Calu3 (cell line): ENCODE measurements at regions of chr14 and their contacts with region 1.

Region 1: GRCh38 chr14:36553656-36554260 is 28.7 kb downstream of the NKX2-8 start:
- DNase-seq: peak; percentile 32
- H3K4me3 Mint-ChIP-seq: no peak overlapping the region
- H3K27ac Mint-ChIP-seq: no peak overlapping the region
- H3K4me1 Mint-ChIP-seq: no peaks in the 10 kb centered on the region
- H3K27me3 Mint-ChIP-seq: no peaks in the 10 kb centered on the region
- CTCF ChIP-seq: peak; percentile 51

Region 2: GRCh38 chr14:35883677-35884293 is 670.0 kb before region 1 on chr14:
- CTCF ChIA-PET with region 1: interaction called, 3 read pairs
- intact Hi-C with region 1: loop called (anchors 5 kb)
- DNase-seq: peak; percentile 37
- H3K4me3 Mint-ChIP-seq: no peak overlapping the region
- H3K27ac Mint-ChIP-seq: no peak overlapping the region
- H3K4me1 Mint-ChIP-seq: peaks cover 8% of the 10 kb centered on the region
- H3K27me3 Mint-ChIP-seq: no peaks in the 10 kb centered on the region
- CTCF ChIP-seq: peak; percentile 58

Region 3: GRCh38 chr14:36105401-36105800 is 448.4 kb before region 1 on chr14:
- CTCF ChIA-PET with region 1: interaction called, 5 read pairs
- intact Hi-C with region 1: loop called (anchors 10 kb)
- DNase-seq: peak; percentile 23
- H3K4me3 Mint-ChIP-seq: no peak overlapping the region
- H3K27ac Mint-ChIP-seq: no peak overlapping the region
- H3K4me1 Mint-ChIP-seq: peaks cover 9% of the 10 kb centered on the region
- H3K27me3 Mint-ChIP-seq: no peaks in the 10 kb centered on the region
- CTCF ChIP-seq: no peak

Region 4: GRCh38 chr14:36361210-36361853 is 192.4 kb before region 1 on chr14:
- CTCF ChIA-PET with region 1: no interaction called
- intact Hi-C with region 1: no loop called
- DNase-seq: no peak
- H3K4me3 Mint-ChIP-seq: no peak overlapping the region
- H3K27ac Mint-ChIP-seq: no peak overlapping the region
- H3K4me1 Mint-ChIP-seq: no peaks in the 10 kb centered on the region
- H3K27me3 Mint-ChIP-seq: no peaks in the 10 kb centered on the region
- CTCF ChIP-seq: no peak

Region 5: GRCh38 chr14:36451301-36452065 is 102.3 kb before region 1 on chr14:
- CTCF ChIA-PET with region 1: no interaction called
- intact Hi-C with region 1: no loop called
- DNase-seq: no peak
- H3K4me3 Mint-ChIP-seq: no peak overlapping the region
- H3K27ac Mint-ChIP-seq: no peak overlapping the region
- H3K4me1 Mint-ChIP-seq: no peaks in the 10 kb centered on the region
- H3K27me3 Mint-ChIP-seq: no peaks in the 10 kb centered on the region
- CTCF ChIP-seq: no peak

Region 6: DNA sequence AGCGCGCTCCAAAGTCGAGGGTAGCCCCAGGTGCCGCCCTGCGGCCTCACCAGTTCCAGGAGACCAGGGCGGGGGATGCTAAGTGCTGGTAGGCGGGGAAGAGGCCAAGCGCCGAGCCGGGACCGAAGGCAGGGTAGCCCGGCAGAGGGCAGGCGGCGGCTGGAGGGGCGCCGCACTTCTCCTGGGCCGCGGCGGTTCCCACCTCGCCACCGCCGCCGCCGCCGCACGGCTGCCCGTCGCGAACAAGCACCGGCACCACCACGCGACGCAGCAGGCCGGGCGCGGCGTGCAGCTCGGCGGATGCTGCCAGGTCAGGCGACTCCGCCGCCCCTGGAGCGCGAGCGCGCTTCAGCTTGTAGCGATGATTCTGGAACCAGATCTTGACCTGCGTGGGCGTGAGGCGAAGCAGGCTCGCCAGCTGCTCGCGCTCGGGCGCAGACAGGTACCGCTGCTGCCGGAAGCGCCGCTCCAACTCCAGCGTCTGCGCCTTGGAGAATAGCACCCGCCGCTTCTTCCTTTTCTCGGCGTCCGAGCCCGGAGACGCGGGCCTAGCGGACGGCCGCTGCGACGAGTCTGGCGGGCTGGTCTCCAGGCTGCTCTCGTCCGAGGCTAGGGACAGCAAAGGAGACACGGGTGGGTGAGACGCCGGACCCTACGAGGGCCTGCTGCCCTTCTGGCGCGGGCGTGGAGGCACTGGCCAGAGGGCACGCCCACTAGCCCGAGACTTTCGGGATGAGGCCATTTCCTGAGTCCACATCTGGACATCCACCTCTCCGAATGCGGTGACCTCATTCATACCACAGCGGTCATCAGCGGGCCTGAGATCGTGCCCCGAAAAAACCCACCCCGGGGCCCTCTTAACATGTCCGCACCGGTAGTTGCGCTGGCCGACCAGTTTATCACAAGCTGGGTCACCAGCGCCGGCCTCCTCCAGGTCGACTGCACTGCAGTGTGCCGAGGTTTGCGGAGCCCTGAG is 27.4 kb after region 1 on chr14:
- CTCF ChIA-PET with region 1: no interaction called
- intact Hi-C with region 1: no loop called
- DNase-seq: peak; percentile 49
- H3K4me3 Mint-ChIP-seq: peak overlapping the region; percentile 80
- H3K27ac Mint-ChIP-seq: no peak overlapping the region
- H3K4me1 Mint-ChIP-seq: no peaks in the 10 kb centered on the region
- H3K27me3 Mint-ChIP-seq: peaks cover 27% of the 10 kb centered on the region
- CTCF ChIP-seq: no peak

Region 7: GRCh38 chr14:36604757-36605505 is 51.2 kb after region 1 on chr14:
- CTCF ChIA-PET with region 1: interaction called, 53 read pairs
- intact Hi-C with region 1: loop called (anchors 1 kb)
- DNase-seq: peak; percentile 68
- H3K4me3 Mint-ChIP-seq: no peak overlapping the region
- H3K27ac Mint-ChIP-seq: no peak overlapping the region
- H3K4me1 Mint-ChIP-seq: peaks cover 12% of the 10 kb centered on the region
- H3K27me3 Mint-ChIP-seq: peaks cover 20% of the 10 kb centered on the region
- CTCF ChIP-seq: peak; percentile 52

Region 8: DNA sequence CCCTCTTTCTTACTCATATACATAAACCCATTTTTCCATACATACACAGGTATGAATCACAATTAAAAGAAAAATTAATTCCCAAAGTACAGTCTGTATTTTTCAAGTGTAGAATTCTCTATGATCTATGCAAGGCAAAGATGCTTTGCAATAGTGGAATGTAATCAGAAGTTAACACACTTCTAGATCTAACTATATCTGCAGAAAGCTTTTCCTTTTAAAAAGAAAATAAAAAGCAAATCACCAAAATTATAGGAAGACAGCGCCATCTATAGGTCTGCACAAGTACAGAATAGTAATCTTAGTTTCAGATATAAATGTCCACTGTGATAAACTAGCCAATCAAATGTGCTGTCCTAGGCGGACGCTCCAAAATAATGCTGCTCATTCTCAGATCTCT is 596.7 kb after region 1 on chr14:
- CTCF ChIA-PET with region 1: interaction called, 5 read pairs
- intact Hi-C with region 1: loop called (anchors 5 kb)
- DNase-seq: peak; percentile 15
- H3K4me3 Mint-ChIP-seq: no peak overlapping the region
- H3K27ac Mint-ChIP-seq: no peak overlapping the region
- H3K4me1 Mint-ChIP-seq: peaks cover 11% of the 10 kb centered on the region
- H3K27me3 Mint-ChIP-seq: no peaks in the 10 kb centered on the region
- CTCF ChIP-seq: peak; percentile 52